Dorsolateral prefrontal cortex (tissue), 120 donors: ENCODE measurements at regions of chr15 and their contacts with region 1.

Region 1: DNA sequence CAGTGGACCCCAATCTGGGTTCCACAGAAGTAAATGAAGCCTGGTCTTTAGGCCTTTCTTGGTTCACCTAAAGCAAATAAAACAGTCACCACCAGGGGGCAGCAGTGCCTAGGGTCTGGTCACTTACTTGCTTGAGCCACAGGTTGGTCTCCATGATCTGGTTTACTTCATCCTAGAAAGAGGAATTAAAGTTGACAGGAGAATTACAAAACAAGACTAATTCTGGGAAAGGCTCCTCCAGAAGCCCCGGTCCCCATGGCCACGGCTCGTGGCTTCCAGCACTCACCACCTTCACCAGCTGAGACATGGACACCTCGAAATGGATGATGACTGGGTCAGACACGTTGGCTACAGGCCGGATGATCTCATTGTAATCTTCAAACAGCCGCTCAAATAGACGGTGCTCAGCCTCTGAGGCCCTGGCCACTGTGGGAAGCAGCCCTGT is 2.3 kb downstream of the CHRNA3 start:
- DNase-seq: peak; percentile 70 to 96 (median 85)
- H3K4me3 ChIP-seq: no peak overlapping the region
- H3K27ac ChIP-seq: no peak overlapping the region
- H3K27me3 ChIP-seq: peaks cover 4 to 50% (median 42%) of the 10 kb centered on the region in 45 donors
- CTCF ChIP-seq: peak; percentile 83 to 95 (median 89)

Region 2: GRCh38 chr15:78709263-78709882 is 90.9 kb after region 1 on chr15:
- intact Hi-C with region 1: loop called in 1 of 2 experiments (anchors 1 kb)
- DNase-seq: peak; percentile 39 to 77 (median 57)
- H3K4me3 ChIP-seq: peak overlapping the region in 25 of 59 donors; percentile 1 to 47 (median 30)
- H3K27ac ChIP-seq: no peak overlapping the region
- H3K27me3 ChIP-seq: peaks cover 0 to 36% (median 9%) of the 10 kb centered on the region in 45 donors
- CTCF ChIP-seq: peak; percentile 34 to 92 (median 84)

Region 3: DNA sequence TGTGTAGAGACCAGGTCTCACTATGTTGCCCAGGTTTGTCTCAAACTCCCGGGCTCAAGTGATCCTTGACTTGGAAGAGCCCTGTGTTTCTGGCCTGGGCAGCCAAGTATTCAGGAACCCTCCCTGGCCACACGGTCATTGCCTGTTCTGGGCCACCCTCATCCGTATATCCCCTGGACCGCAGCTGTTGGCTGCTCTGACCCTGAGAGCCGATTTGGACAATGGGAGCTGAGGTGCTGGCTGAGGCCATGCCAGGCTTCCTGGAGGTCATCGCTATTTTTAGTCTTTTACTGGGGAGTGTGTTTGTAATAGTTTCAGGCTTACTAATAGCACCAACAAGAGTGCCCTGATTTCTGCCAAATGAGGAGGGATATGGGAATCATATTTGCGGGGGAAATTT is 132.1 kb after region 1 on chr15:
- intact Hi-C with region 1: loop called (anchors 1 to 5 kb)
- DNase-seq: peak in 3 of 10 donors; percentile 14 to 40 (median 22)
- H3K4me3 ChIP-seq: peak overlapping the region in 38 of 59 donors; percentile 1 to 51 (median 28)
- H3K27ac ChIP-seq: peak overlapping the region in 19 of 59 donors; percentile 3 to 82 (median 46)
- H3K27me3 ChIP-seq: no peaks in the 10 kb centered on the region
- CTCF ChIP-seq: no peak

Region 4: DNA sequence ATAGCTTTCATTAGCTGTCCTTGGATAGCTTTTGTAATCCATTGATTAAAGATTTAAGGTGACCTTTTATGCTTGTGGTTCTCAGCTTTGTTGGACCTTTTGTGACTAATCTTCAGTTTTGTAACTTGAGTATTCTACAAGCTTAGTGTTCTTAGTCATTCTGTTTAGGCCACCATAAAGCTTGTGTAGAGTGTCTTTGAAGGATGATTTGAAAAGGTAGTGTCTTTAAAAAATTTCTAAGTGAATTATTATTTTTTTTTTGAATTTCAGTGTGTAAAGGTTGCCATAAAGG is 261.7 kb after region 1 on chr15:
- intact Hi-C with region 1: no loop called
- DNase-seq: no peak
- H3K4me3 ChIP-seq: no peak overlapping the region
- H3K27ac ChIP-seq: peak overlapping the region in 1 of 59 donors; percentile 17
- H3K27me3 ChIP-seq: no peaks in the 10 kb centered on the region
- CTCF ChIP-seq: no peak